Activated naive CD8-positive, alpha-beta T cell treated with anti-CD3 and anti-CD28 coated beads, Interleukin-2, amount 10 ng/mL, durations not matched to agents 7 days and 5 days (primary cell): ENCODE measurements at regions of chr7 and their contacts with region 1.

Region 1: DNA sequence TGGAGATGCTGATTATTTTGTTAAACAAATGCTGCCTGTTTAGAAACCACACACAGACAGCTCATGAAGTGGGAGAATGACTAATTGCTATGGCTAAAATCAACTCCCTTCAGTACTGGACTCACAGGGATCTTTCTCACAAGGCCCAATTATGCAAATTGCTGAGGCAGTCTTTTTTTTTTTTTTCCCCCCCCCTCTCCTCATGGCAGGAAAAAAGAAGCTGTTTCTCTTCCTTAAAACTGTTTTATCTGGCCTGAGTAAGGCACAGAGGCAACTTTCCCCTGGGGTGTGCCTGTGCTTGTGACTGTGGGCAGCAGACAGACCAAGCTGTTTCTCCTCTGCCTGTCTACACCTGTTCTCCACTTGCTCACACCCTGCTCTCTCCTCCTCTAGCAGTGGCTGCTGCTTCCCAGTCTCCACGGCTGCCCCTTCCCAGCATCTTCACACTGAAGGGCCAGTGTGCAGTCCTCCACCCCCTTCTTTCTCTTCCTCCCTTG is 65.4 kb upstream of the STEAP1B start:
- DNase-seq: no peak
- ATAC-seq: peak; percentile 5
- H3K4me3 Mint-ChIP-seq: peak overlapping the region; percentile 82
- H3K27ac Mint-ChIP-seq: peak overlapping the region; percentile 73
- H3K4me1 Mint-ChIP-seq: peaks cover 56% of the 10 kb centered on the region
- H3K27me3 Mint-ChIP-seq: peaks cover 17% of the 10 kb centered on the region

Region 2: GRCh38 chr7:22726345-22727185 is 161.2 kb after region 1 on chr7:
- POLR2A ChIA-PET with region 1: interaction called, 22 read pairs
- DNase-seq: peak; percentile 66
- ATAC-seq: peak; percentile 90
- H3K4me3 Mint-ChIP-seq: peak overlapping the region; percentile 75
- H3K27ac Mint-ChIP-seq: peak overlapping the region; percentile 83
- H3K4me1 Mint-ChIP-seq: peaks cover 50% of the 10 kb centered on the region
- H3K27me3 Mint-ChIP-seq: peaks cover 9% of the 10 kb centered on the region